Activated CD8-positive, alpha-beta T cell treated with anti-CD3 and anti-CD28 coated beads, Interleukin-2, amount 10 ng/mL, durations not matched to agents 7 days and 5 days (primary cell): ENCODE measurements at regions of chr12 and their contacts with region 1.

Region 1: GRCh38 chr12:54337280-54337842 is 12.4 kb downstream of the COPZ1 start:
- DNase-seq: no peak
- ATAC-seq: no peak
- H3K4me3 Mint-ChIP-seq: no peak overlapping the region
- H3K27ac Mint-ChIP-seq: no peak overlapping the region
- H3K4me1 Mint-ChIP-seq: peaks cover 6% of the 10 kb centered on the region
- H3K27me3 Mint-ChIP-seq: no peaks in the 10 kb centered on the region

Region 2: GRCh38 chr12:54294152-54294952 is 43.0 kb before region 1 on chr12:
- CTCF ChIA-PET with region 1: interaction called, 33 read pairs
- POLR2A ChIA-PET with region 1: no interaction called
- DNase-seq: peak; percentile 76
- ATAC-seq: peak; percentile 58
- H3K4me3 Mint-ChIP-seq: no peak overlapping the region
- H3K27ac Mint-ChIP-seq: no peak overlapping the region
- H3K4me1 Mint-ChIP-seq: peaks cover 5% of the 10 kb centered on the region
- H3K27me3 Mint-ChIP-seq: peaks cover 18% of the 10 kb centered on the region

Region 3: GRCh38 chr12:54324617-54325441 is 12.5 kb before region 1 on chr12 and contains the start of gene COPZ1:
- CTCF ChIA-PET with region 1: interaction called, 105 read pairs
- POLR2A ChIA-PET with region 1: interaction called, 7 read pairs
- DNase-seq: peak; percentile 98
- ATAC-seq: peak; percentile 99
- H3K4me3 Mint-ChIP-seq: peak within 1 kb of the TSS; percentile 97
- H3K27ac Mint-ChIP-seq: peak within 1 kb of the TSS; percentile 92
- H3K4me1 Mint-ChIP-seq: peaks cover 38% of the 10 kb centered on the region
- H3K27me3 Mint-ChIP-seq: no peaks in the 10 kb centered on the region
- total RNA-seq, gene COPZ1: 105 to 112 TPM

Region 4: GRCh38 chr12:54359033-54359761 is 21.8 kb after region 1 on chr12:
- CTCF ChIA-PET with region 1: interaction called, 96 read pairs
- POLR2A ChIA-PET with region 1: interaction called, 7 read pairs
- DNase-seq: peak; percentile 98
- ATAC-seq: peak; percentile 96
- H3K4me3 Mint-ChIP-seq: no peak overlapping the region
- H3K27ac Mint-ChIP-seq: no peak overlapping the region
- H3K4me1 Mint-ChIP-seq: peaks cover 30% of the 10 kb centered on the region
- H3K27me3 Mint-ChIP-seq: no peaks in the 10 kb centered on the region

Region 5: DNA sequence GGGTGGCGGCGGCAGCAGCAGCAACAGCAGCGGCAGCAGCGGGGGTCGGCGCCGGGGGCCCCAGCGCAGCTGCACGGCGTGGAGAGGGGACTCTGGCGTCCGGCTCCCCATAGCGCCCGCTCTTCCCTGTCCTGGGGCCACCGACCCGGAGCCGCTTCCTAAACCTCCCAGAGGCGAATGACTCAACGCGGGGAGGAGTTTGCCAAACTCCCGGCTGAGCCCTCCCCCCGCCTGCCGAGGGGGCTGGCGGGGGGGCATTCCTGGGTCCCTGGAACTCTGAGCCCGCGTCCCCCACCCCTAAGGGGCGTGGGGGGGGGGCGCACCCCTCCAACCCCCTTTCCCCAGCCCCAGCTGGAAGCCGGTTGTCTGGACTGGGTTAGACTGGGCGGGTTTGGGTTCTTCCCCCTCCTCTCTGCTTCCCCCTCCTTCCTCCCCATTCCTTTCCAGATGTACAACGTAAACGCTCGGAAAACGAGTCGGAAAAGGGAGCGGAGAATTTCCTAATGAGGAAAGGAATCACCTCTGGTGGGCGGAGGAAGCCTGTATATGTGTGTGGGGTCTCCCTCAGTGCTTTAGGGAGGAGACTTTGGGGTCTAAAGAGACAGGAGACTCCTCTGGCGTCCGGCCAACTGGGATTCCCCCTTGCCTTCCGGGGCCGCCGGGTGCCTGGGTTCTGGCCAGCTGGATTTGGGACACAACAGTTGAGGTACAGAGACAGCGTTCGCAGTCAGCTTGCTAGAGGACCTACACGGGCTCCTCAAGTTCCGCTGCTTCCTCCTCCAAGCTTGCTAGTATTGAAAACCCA is 81.9 kb after region 1 on chr12 and contains the start of gene ITGA5:
- CTCF ChIA-PET with region 1: no interaction called
- POLR2A ChIA-PET with region 1: no interaction called
- DNase-seq: no peak
- ATAC-seq: peak; percentile 54
- H3K4me3 Mint-ChIP-seq: peak within 1 kb of the TSS; percentile 94
- H3K27ac Mint-ChIP-seq: peak within 1 kb of the TSS; percentile 91
- H3K4me1 Mint-ChIP-seq: peaks cover 54% of the 10 kb centered on the region
- H3K27me3 Mint-ChIP-seq: peaks cover 28% of the 10 kb centered on the region
- total RNA-seq, gene ITGA5: 65.0 to 69.1 TPM